ENCODE measurements at regions of chr6 and their contacts with region 1.

Region 1: GRCh38 chr6:15691250-15691869 is 28.5 kb upstream of the DTNBP1 start:
- DNase-seq: peak; percentile 84 to 91 (median 87)
- ATAC-seq: peak; percentile 82 to 100 (median 96)
- H3K4me3 ChIP-seq: peak overlapping the region in 10 of 12 donors; percentile 13 to 56 (median 32)
- H3K27ac ChIP-seq: peak overlapping the region in 3 of 12 donors; percentile 37 to 51 (median 43)
- H3K4me1 ChIP-seq: peaks cover 0 to 17% (median 9%) of the 10 kb centered on the region in 12 donors
- H3K27me3 ChIP-seq: no peaks in the 10 kb centered on the region
- CTCF ChIP-seq: peak; percentile 98 to 100 (median 100)
- POLR2A ChIP-seq: no peak

Region 2: DNA sequence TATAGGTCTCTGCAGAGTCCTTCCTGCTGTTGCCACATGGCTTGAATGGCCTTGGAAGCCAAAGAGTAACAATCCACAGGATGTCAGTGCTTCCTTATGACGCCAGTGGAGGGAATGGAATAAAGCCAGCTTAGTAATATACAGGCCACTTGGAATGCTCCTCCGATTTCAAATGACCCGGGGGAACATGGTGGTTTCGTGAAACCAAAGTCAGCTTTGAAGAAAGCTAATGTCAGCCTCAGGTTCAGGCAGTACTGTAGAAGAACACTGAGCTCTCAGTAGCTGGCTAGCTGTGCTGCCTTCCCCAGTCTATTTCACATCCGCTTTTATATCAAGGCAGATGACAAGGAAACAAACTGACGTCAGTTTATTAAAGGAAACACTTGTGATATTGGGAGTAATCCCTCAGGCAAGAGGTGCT is 217.6 kb before region 1 on chr6:
- intact Hi-C with region 1: no loop called
- DNase-seq: peak in 2 of 5 donors; percentile 45 to 50
- ATAC-seq: peak; percentile 78 to 91 (median 86)
- H3K4me3 ChIP-seq: no peak overlapping the region
- H3K27ac ChIP-seq: peak overlapping the region; percentile 43 to 86 (median 64)
- H3K4me1 ChIP-seq: peaks cover 7 to 82% (median 45%) of the 10 kb centered on the region in 12 donors
- H3K27me3 ChIP-seq: no peaks in the 10 kb centered on the region
- CTCF ChIP-seq: no peak
- POLR2A ChIP-seq: no peak

Region 3: DNA sequence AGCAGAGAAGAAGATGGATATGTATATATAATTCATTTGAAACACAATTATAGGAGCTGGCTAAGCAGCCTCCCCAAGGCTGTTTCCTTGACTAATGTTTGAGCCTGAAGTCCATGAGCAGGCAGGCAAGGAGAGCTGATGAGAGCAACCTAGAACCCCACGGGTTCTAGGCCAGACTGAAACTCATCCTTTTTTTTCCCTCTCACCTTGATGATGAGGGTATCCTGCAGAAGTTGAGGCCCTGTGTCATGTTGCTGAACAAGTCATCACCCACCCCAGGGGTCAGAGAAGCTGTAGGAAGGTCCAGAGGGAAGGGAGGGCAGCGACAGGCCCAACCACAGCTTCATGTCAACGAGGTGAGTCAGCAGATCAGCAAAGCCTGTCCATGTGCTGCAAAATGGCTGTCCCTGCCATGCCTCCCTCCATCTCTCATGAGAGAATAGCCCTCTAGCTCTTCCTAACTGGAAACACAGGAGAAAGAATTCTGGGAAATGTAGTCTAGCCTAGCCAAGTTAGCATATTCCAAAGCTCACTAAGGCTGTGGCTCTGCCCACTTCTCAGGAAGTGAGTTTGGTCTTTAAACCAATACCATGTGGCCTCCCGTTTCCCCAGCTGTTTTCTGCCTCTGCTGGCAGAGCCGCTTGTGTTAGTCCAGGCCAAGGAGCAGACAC is 62.8 kb after region 1 on chr6:
- intact Hi-C with region 1: no loop called
- DNase-seq: no peak
- ATAC-seq: no peak
- H3K4me3 ChIP-seq: no peak overlapping the region
- H3K27ac ChIP-seq: no peak overlapping the region
- H3K4me1 ChIP-seq: no peaks in the 10 kb centered on the region
- H3K27me3 ChIP-seq: no peaks in the 10 kb centered on the region
- CTCF ChIP-seq: no peak
- POLR2A ChIP-seq: no peak

Region 4: GRCh38 chr6:16168858-16169257 is 477.5 kb after region 1 on chr6:
- intact Hi-C with region 1: loop called in 1 of 10 experiments (anchors 5 kb)
- DNase-seq: no peak
- ATAC-seq: no peak
- H3K4me3 ChIP-seq: no peak overlapping the region
- H3K27ac ChIP-seq: no peak overlapping the region
- H3K4me1 ChIP-seq: no peaks in the 10 kb centered on the region
- H3K27me3 ChIP-seq: peaks cover 0 to 5% (median 0%) of the 10 kb centered on the region in 9 donors
- CTCF ChIP-seq: peak in 10 of 12 donors; percentile 35 to 57 (median 46)
- POLR2A ChIP-seq: no peak

Region 5: GRCh38 chr6:16183187-16183664 is 491.9 kb after region 1 on chr6:
- intact Hi-C with region 1: loop called (anchors 1 to 5 kb)
- DNase-seq: no peak
- ATAC-seq: peak in 2 of 4 donors; percentile 48 to 59
- H3K4me3 ChIP-seq: no peak overlapping the region
- H3K27ac ChIP-seq: peak overlapping the region in 3 of 12 donors; percentile 42 to 50 (median 48)
- H3K4me1 ChIP-seq: peaks cover 0 to 6% (median 4%) of the 10 kb centered on the region in 12 donors
- H3K27me3 ChIP-seq: peaks cover 0 to 4% (median 0%) of the 10 kb centered on the region in 9 donors
- CTCF ChIP-seq: peak; percentile 63 to 85 (median 78)
- POLR2A ChIP-seq: no peak

Region 6: GRCh38 chr6:16206595-16207037 is 515.3 kb after region 1 on chr6:
- intact Hi-C with region 1: loop called (anchors 1 to 5 kb)
- DNase-seq: peak in 4 of 5 donors; percentile 41 to 59 (median 52)
- ATAC-seq: peak; percentile 53 to 78 (median 74)
- H3K4me3 ChIP-seq: no peak overlapping the region
- H3K27ac ChIP-seq: peak overlapping the region in 3 of 12 donors; percentile 28 to 48 (median 35)
- H3K4me1 ChIP-seq: peaks cover 0 to 16% (median 5%) of the 10 kb centered on the region in 12 donors
- H3K27me3 ChIP-seq: peaks cover 0 to 10% (median 0%) of the 10 kb centered on the region in 9 donors
- CTCF ChIP-seq: peak; percentile 93 to 99 (median 97)
- POLR2A ChIP-seq: no peak

Measured in heart left ventricle (tissue), 16 donors.